H1 (cell line): ENCODE measurements at regions of chr12 and their contacts with region 1.

Region 1: DNA sequence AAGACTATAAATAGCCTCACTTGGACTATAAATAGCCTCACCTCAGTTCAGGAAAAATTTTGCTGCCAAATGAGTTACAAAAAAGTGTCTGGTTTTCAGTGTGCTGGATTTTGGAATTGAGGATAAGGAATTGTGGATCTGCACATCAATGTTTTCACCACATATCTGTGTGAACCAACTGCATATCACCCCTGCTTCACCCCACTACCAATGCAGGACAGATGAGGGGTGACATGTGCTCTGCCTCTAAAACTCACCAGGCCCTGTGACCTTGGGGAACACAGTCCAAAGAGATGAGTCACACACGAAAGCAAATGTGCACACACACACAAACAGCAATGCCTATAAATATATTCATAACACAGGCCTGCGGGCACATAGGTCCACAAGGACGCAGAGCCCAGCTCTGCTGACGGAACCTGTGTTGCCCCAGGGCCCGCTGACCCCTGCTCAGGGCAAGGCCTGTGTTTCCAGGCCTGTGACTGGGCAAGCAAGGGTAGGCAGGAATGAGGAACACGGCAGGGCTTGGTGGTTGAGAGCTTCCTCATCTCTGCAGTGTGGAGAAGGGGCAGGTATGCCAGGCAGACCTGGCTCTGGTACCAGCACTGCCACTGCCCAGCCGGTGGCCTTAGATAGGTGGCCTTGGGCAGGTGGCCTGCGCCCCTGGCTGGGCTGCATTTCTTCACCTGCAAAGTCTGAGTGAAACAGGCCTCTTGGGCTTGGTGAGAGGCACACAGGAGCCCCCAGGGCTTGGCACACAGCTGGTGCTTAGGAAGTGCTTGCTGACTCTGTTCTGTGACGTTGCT is 82.4 kb downstream of the ARL6IP4 start:
- DNase-seq: no peak
- H3K4me3 ChIP-seq: no peak overlapping the region
- H3K27ac ChIP-seq: no peak overlapping the region
- H3K4me1 ChIP-seq: no peaks in the 10 kb centered on the region
- H3K27me3 ChIP-seq: no peaks in the 10 kb centered on the region
- CTCF ChIP-seq: no peak
- EP300 ChIP-seq: no peak
- POLR2A ChIP-seq: no peak
- RAD21 ChIP-seq: no peak

Region 2: DNA sequence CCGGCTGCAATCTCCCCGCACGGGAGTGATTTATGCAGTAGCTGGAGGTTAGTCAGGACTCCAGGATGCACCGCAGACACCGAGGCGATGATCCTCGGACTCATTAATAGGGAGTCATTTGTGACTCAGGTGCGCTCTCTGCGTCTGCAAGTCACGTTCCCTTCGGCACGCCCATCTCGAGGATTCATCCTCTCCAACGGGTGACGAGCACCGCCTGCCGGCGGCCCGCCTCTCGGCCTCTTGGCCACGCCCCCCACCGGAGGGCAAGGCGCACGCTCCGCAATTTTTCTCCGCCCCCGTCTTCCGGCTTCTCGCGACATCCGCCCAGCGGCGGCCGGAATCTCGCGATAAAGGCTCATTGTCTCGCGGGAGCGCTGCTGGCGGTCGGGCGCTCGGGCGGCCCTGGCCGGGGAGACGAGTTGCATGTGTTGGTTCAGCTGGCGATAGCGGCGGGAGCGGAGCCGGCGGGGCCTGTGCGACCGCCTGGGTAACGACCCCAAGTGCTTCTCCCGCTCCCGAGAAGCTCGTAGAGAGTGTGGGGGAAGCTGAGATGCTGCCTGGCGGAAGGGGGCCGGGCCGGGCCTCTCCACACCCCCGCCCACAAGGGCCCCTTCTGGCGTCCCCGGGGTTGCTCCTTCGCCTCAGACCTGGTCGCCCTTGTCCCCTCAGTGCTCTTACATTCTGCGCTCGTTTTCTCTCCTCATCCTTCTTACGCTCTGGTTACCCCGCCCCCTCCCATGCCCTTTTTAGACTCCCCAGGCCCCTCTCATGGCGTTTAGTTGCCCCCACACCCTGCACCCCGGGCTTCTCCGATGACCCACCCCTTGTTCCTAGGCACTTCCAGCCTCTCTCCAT is 310.2 kb before region 1 on chr12 and contains the start of gene DENR:
- CTCF ChIA-PET with region 1: no interaction called
- POLR2A ChIA-PET with region 1: no interaction called
- DNase-seq: peak; percentile 96 to 100
- H3K4me3 ChIP-seq: peak within 1 kb of the TSS; percentile 79 to 98 (median 88)
- H3K27ac ChIP-seq: peak within 1 kb of the TSS; percentile 83
- H3K4me1 ChIP-seq: peaks cover 2 to 9% (median 6%) of the 10 kb centered on the region in 4 experiments; a peak in 5 of 7 replicates
- H3K27me3 ChIP-seq: no peaks in the 10 kb centered on the region
- CTCF ChIP-seq: peak; percentile 87 to 95 (median 95)
- EP300 ChIP-seq: 0 out of 3 replicates have a peak, but pooled peaks of 1 of the 2 experiments have one; percentile 6
- POLR2A ChIP-seq: peak; percentile 79 to 96
- RAD21 ChIP-seq: peak; percentile 93 to 96
- total RNA-seq, gene DENR: 78.1 and 84.0 TPM in 2 replicates

Region 3: GRCh38 chr12:123034865-123035264 is 28.0 kb before region 1 on chr12:
- CTCF ChIA-PET with region 1: interaction called, 15 read pairs
- POLR2A ChIA-PET with region 1: interaction called, 3 read pairs
- DNase-seq: no peak
- H3K4me3 ChIP-seq: no peak overlapping the region
- H3K27ac ChIP-seq: no peak overlapping the region
- H3K4me1 ChIP-seq: no peaks in the 10 kb centered on the region
- H3K27me3 ChIP-seq: no peaks in the 10 kb centered on the region
- CTCF ChIP-seq: no peak
- EP300 ChIP-seq: no peak
- POLR2A ChIP-seq: no peak
- RAD21 ChIP-seq: no peak

Region 4: GRCh38 chr12:123075646-123076171 is 12.8 kb after region 1 on chr12:
- CTCF ChIA-PET with region 1: interaction called, 148 read pairs
- POLR2A ChIA-PET with region 1: interaction called, 5 read pairs
- DNase-seq: peak; percentile 33 to 63
- H3K4me3 ChIP-seq: no peak overlapping the region
- H3K27ac ChIP-seq: no peak overlapping the region
- H3K4me1 ChIP-seq: peaks cover 0 to 9% (median 3%) of the 10 kb centered on the region in 4 experiments; a peak in 5 of 7 replicates
- H3K27me3 ChIP-seq: peaks cover 0 to 3% (median 0%) of the 10 kb centered on the region in 4 experiments; a peak in 1 of 7 replicates
- CTCF ChIP-seq: no peak
- EP300 ChIP-seq: no peak
- POLR2A ChIP-seq: no peak
- RAD21 ChIP-seq: peak in 1 of 2 experiments; percentile 20; a peak in 1 of 4 replicates